ENCODE measurements at regions of chr2 and their contacts with region 1.

Region 1: DNA sequence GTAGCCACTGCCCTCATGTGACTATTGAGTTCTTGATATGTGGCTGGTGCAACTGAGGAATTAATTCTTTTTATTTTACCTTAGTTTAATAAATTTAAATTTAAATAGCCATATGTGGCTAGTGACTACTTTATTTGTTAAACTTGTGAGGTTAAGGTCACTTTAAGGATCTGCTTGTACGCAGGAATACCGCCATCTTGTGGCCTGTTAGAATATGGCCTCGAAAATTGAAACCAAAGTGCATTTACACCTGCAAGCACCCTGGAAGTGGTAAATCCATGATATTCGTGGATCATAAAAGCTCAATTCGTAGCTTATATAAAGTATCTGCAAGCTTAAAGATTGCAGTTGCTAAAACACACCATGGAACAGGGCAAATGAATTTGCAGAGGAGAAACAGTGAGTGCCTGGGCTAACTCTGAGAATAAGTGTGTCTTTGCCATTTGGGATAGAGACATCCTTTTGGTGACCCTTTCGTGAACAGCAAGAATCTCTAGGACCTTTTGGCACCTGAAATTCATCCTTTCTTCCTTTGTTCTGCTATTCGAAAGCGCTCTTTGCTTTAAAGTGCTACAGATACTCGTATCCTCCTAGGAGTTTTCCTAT is 59.9 kb upstream of the REG3A start:
- DNase-seq: no peak
- H3K4me3 ChIP-seq: no peak overlapping the region
- H3K27ac ChIP-seq: no peak overlapping the region
- H3K4me1 ChIP-seq: no peaks in the 10 kb centered on the region
- H3K27me3 ChIP-seq: no peaks in the 10 kb centered on the region
- CTCF ChIP-seq: no peak
- EP300 ChIP-seq: no peak
- POLR2A ChIP-seq: no peak

Region 2: GRCh38 chr2:78654941-78655340 is 564.5 kb before region 1 on chr2:
- intact Hi-C with region 1: loop called in 1 of 4 experiments (anchors 10 kb)
- DNase-seq: no peak
- H3K4me3 ChIP-seq: no peak overlapping the region
- H3K27ac ChIP-seq: no peak overlapping the region
- H3K4me1 ChIP-seq: no peaks in the 10 kb centered on the region
- H3K27me3 ChIP-seq: no peaks in the 10 kb centered on the region
- CTCF ChIP-seq: no peak
- EP300 ChIP-seq: no peak
- POLR2A ChIP-seq: no peak

Region 3: GRCh38 chr2:78861546-78861945 is 357.9 kb before region 1 on chr2:
- intact Hi-C with region 1: no loop called
- DNase-seq: no peak
- H3K4me3 ChIP-seq: no peak overlapping the region
- H3K27ac ChIP-seq: no peak overlapping the region
- H3K4me1 ChIP-seq: no peaks in the 10 kb centered on the region
- H3K27me3 ChIP-seq: no peaks in the 10 kb centered on the region
- CTCF ChIP-seq: no peak
- EP300 ChIP-seq: no peak
- POLR2A ChIP-seq: no peak

Region 4: DNA sequence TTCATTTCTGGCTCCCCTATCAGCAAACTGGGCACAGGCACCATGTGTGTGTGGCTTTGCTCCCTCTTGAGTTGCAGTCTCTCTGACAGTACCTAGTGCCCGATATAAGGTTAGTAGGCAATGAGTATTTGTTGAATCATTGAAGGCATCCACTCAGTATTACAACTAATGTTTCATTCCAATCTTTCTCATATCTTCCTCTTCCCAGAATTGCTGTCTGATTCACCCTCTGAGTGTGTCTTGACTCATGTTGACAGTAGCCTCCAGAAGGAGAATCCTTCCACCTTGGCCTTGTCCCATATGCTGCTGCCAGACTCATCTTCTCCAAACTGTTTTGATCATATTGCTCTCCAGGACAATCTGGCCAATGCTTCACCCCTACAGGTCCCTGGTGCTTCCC is 882.5 kb after region 1 on chr2:
- intact Hi-C with region 1: no loop called
- DNase-seq: no peak
- H3K4me3 ChIP-seq: no peak overlapping the region
- H3K27ac ChIP-seq: no peak overlapping the region
- H3K4me1 ChIP-seq: no peaks in the 10 kb centered on the region
- H3K27me3 ChIP-seq: no peaks in the 10 kb centered on the region
- CTCF ChIP-seq: no peak
- EP300 ChIP-seq: no peak
- POLR2A ChIP-seq: no peak